ENCODE measurements at regions of chr13 and their contacts with region 1.

Region 1: DNA sequence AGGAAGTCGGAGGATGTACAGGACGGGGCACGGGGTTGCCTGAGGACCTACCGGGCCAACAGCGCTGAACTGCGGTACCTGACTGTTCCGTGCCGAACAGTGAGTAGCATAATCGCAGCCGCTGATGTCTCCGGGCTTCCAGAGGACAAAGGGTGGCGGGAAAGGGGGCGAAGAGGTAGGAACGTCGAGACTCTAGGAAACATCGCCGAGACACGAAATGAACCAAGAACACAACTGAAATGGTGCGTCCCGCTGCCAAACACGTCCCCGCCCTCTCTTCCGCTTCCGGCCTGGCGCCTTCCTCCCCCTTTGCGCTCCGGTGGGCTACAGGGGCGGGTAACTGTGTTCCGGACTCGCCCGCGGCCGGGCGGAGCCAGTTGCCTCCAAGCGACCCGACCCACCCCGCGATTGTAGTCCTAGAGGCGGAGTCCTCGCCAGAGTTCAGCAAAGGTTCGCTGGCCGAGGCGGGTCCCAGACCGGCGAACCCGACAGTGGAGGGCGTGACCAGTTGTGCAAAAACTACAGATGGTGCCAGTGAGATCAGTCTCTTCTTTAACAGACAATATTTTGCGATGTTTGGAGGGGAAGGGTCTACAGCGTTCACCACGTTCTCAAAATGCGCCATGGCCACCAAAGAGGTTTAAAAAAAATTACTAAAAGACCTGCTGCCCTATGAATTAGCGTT is at the start of gene MRPS31:
- DNase-seq: peak; percentile 96
- H3K4me3 ChIP-seq: peak within 1 kb of the TSS; percentile 85
- H3K27ac ChIP-seq: peak within 1 kb of the TSS; percentile 92
- H3K4me1 ChIP-seq: peaks cover 15% of the 10 kb centered on the region
- H3K27me3 ChIP-seq: no peaks in the 10 kb centered on the region
- CTCF ChIP-seq: peak; percentile 13
- total RNA-seq, gene MRPS31: 32.2 TPM

Region 2: GRCh38 chr13:39684531-39685137 is 1086.4 kb before region 1 on chr13:
- intact Hi-C with region 1: loop called (anchors 10 kb)
- DNase-seq: no peak
- H3K4me3 ChIP-seq: no peak overlapping the region
- H3K27ac ChIP-seq: no peak overlapping the region
- H3K4me1 ChIP-seq: peaks cover 9% of the 10 kb centered on the region
- H3K27me3 ChIP-seq: no peaks in the 10 kb centered on the region
- CTCF ChIP-seq: peak; percentile 56

Region 3: GRCh38 chr13:40344270-40345148 is 426.6 kb before region 1 on chr13:
- intact Hi-C with region 1: no loop called
- DNase-seq: no peak
- H3K4me3 ChIP-seq: no peak overlapping the region
- H3K27ac ChIP-seq: peak overlapping the region; percentile 41
- H3K4me1 ChIP-seq: peaks cover 27% of the 10 kb centered on the region
- H3K27me3 ChIP-seq: no peaks in the 10 kb centered on the region
- CTCF ChIP-seq: no peak

Measured in left ventricle myocardium inferior (tissue), 1 donor.